Naive thymus-derived CD8-positive, alpha-beta T cell (primary cell): ENCODE measurements at regions of chr22 and their contacts with region 1.

Region 1: GRCh38 chr22:40452730-40453493 is 82.5 kb downstream of the SGSM3 start:
- DNase-seq: peak in 2 of 10 donors; percentile 11
- ATAC-seq: peak; percentile 34 to 41
- H3K4me3 Mint-ChIP-seq: peak overlapping the region; percentile 4 to 75 (median 53)
- H3K27ac Mint-ChIP-seq: peak overlapping the region; percentile 38 to 96 (median 81)
- H3K4me1 Mint-ChIP-seq: peaks cover 39 to 91% (median 82%) of the 10 kb centered on the region in 4 donors
- H3K27me3 Mint-ChIP-seq: no peaks in the 10 kb centered on the region

Region 2: GRCh38 chr22:40463017-40463631 is 10.2 kb after region 1 on chr22:
- POLR2A ChIA-PET with region 1: interaction called, 45 read pairs
- DNase-seq: peak in 9 of 10 donors; percentile 12 to 73 (median 49)
- ATAC-seq: peak; percentile 83 to 85
- H3K4me3 Mint-ChIP-seq: peak overlapping the region; percentile 81 to 99 (median 98)
- H3K27ac Mint-ChIP-seq: peak overlapping the region; percentile 94 to 99 (median 96)
- H3K4me1 Mint-ChIP-seq: peaks cover 33 to 77% (median 70%) of the 10 kb centered on the region in 4 donors
- H3K27me3 Mint-ChIP-seq: no peaks in the 10 kb centered on the region